ENCODE measurements at regions of chr9 and their contacts with region 1.

Region 1: DNA sequence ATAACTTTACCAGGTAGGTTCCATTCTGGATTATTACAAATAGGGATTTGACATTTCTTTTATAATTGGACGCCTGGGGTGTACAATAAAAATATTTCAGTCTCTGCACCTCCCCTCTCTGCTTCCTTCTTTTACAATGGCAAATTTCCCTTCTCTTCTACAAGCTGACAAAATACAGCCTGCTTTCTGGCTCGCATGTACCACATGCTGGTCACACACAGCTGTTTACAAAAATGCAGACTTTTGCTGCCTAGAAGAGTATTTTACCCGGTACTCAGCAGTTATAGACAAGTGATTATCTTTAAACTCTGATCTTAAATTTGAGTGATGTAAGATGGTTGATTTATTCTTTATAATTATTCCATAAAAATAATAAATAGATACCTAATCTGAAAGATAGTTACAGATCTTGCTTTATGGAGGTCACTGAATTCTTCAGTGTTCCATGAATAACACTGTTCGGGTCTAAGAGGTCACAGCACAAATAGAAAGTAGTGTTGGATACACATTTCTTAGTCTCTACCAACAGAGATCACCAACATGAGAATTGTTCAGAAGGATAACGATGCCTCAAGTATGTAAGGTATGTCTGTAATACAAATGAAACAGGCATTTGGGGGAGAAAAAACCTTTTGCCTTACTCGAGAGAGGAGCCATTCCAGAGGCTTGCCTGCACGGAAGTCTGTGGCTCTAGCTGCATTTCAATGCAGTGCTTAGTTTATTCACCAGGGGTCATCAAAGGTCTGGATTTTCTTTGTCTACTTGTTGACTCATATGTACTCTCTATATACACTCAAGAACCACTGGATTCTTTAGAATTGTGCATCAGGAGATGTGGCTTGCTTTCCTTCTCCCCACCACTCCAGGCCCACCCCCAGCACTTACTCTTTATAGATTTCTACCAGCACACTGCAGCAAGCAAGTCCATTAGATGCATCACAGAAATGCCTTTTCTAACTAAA is 206.6 kb upstream of the RFX3 start:
- DNase-seq: peak in 1 of 2 donors; percentile 26
- ATAC-seq: peak; percentile 100

Region 2: GRCh38 chr9:4228606-4229005 is 496.2 kb after region 1 on chr9:
- intact Hi-C with region 1: loop called in 1 of 2 experiments (anchors 5 kb)
- DNase-seq: no peak
- ATAC-seq: peak; percentile 70

Region 3: GRCh38 chr9:4339357-4339756 is 607.0 kb after region 1 on chr9:
- intact Hi-C with region 1: loop called in 1 of 2 experiments (anchors 10 kb)
- DNase-seq: peak; percentile 71 to 93
- ATAC-seq: peak; percentile 90

Region 4: DNA sequence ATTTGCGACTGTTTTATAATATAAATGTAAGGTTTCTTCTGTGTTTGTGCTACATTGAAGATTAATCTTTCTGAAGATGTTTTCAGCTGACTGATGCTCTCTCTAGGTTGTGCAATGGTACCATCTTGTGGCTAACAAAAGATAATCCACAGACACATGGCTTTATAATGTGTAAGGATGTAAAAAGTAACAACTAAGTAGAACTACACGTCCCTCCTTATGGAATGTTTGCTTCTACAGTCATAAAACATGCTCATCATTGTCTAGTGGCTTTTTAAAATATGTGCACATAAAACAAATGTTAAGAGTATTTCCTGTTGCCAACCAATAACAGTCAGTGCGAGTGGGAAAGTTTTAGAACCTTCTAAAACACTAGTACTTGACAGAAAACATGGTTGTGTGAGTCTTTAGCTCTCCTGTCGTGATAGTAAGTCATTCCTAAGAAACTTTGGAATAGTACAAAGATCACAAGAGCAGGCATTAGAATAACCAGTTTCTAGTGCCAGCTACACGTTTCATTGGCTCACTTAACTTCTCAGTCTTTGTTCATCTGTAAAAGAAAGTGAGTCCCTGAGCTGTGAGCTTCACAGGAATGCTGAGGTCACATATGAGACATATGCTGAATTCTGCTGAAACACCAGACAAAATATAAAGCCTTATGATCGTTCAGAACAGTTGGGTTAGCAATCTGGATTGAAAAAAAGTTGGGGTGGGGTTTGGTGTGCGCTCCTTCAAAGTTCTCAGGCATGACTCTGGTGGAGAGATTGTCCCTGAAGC is 643.3 kb after region 1 on chr9:
- intact Hi-C with region 1: loop called in 1 of 2 experiments (anchors 10 kb)
- DNase-seq: no peak
- ATAC-seq: peak; percentile 51